GM10248 (cell line): ENCODE measurements at regions of chr15 and their contacts with region 1.

Region 1: GRCh38 chr15:40857601-40858341 is 13.9 kb downstream of the SPINT1 start:
- DNase-seq: peak; percentile 89
- CTCF ChIP-seq: peak; percentile 97

Region 2: GRCh38 chr15:40238532-40239403 is 619.0 kb before region 1 on chr15 and contains the start of gene PAK6:
- CTCF ChIA-PET with region 1: no interaction called
- POLR2A ChIA-PET with region 1: no interaction called
- DNase-seq: no peak
- CTCF ChIP-seq: no peak

Region 3: GRCh38 chr15:40694688-40695468 is 162.9 kb before region 1 on chr15 and contains the start of gene RAD51:
- CTCF ChIA-PET with region 1: interaction called, 10 read pairs
- POLR2A ChIA-PET with region 1: no interaction called
- DNase-seq: peak; percentile 95
- CTCF ChIP-seq: no peak

Region 4: DNA sequence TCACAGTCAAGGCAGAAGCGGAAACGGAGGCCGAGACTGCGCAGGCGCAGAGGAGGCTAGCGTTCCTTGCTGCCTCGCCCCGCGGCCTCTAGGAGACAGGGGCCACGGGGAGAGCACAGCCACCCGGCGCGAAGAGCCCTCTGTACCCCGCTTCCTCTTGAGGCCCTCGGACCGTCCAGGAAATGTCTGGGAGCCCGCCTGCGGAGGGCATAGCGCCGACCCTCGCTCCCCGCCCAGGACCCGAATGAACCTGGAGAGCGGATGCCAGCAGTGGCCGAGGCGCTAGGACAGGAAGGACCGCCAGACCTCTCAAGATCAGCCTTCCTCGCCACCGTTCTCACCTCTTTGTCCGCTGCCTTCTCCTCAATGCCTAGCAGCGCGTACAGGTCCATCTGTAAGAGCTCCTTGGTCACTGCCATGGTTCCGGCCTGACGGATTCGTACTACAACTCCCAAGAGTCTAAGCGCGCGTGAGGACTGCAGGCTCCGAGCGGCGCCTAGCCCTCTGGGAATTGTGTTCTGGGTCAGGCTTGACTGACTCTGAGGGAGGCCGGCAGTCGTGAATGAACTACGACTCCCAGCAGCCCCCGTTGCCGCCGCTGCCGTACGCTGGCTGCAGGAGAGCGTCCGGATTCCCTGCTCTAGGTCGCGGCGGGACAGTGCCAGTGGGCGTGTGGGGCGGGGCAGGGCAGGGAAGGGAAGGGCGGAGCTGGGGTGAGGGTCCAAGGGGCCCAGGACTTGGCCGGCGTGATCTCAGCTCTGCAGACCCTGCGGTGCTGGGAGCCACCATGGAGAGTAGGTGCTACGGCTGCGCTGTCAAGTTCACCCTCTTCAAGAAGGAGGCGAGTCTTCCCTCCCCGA is 50.5 kb before region 1 on chr15 and contains the starts of genes DNAJC17 and ZFYVE19:
- CTCF ChIA-PET with region 1: interaction called, 20 read pairs
- POLR2A ChIA-PET with region 1: no interaction called
- DNase-seq: peak; percentile 94
- CTCF ChIP-seq: no peak

Region 5: GRCh38 chr15:40832960-40833359 is 24.8 kb before region 1 on chr15:
- CTCF ChIA-PET with region 1: interaction called, 11 read pairs
- POLR2A ChIA-PET with region 1: no interaction called
- DNase-seq: no peak
- CTCF ChIP-seq: no peak

Region 6: DNA sequence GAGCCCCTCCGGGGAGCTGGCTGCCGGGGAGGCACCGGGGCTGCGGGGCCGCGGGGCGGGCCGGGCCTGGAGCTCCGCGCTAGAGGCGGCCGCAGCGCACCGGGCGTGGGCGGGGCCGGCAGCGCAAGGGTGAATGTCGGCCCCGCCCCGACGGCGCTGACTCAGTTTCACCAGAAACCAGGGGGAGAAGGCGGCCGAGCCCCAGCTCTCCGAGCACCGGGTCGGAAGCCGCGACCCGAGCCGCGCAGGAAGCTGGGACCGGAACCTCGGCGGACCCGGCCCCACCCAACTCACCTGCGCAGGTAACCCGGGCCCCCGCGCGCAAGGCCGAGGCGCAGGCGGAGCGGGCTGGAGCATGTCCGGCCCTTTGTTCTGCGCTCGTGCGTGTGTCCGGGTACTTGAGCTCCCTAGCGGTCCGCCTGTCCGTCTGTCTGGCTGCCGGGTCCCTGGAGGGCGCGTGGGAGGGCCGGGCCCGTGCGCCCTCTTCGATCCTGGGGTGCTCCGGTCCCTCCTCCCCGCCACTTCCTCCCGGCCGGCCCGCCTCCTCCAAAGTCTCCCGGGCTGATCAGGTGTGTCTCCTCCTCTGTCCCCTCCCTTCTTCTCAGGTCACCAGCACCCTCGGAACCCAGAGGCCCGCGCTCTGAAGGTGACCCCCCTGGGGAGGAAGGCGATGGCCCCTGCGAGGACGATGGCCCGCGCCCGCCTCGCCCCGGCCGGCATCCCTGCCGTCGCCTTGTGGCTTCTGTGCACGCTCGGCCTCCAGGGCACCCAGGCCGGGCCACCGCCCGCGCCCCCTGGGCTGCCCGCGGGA is 13.7 kb before region 1 on chr15 and contains the start of gene SPINT1:
- CTCF ChIA-PET with region 1: no interaction called
- POLR2A ChIA-PET with region 1: no interaction called
- DNase-seq: peak; percentile 73
- CTCF ChIP-seq: no peak

Region 7: DNA sequence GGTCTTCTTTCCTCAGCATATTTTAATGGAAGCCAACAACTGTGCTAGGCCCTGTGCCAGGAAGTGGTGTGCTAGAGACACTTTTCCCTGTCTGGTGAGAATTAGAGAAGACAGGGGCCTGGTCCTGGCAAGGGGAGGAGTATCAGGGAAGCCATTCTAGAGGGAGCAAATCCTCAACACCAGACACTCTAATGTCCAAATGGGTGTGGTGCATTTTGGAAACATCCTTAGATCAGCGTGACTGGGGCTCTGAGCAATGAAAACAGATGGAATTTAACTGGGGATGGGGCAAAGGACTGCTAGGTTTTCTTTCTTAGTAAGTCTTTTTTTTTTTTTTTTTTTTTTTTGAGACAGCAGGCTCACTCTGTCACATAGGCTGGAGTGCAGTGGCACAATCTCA is 28.8 kb after region 1 on chr15:
- CTCF ChIA-PET with region 1: no interaction called
- POLR2A ChIA-PET with region 1: no interaction called
- DNase-seq: no peak
- CTCF ChIP-seq: no peak

Region 8: GRCh38 chr15:41022487-41023090 is 164.8 kb after region 1 on chr15:
- CTCF ChIA-PET with region 1: interaction called, 15 read pairs
- POLR2A ChIA-PET with region 1: no interaction called
- DNase-seq: peak; percentile 37
- CTCF ChIP-seq: peak; percentile 65